ENCODE measurements at regions of chr4 and their contacts with region 1.

Region 1: DNA sequence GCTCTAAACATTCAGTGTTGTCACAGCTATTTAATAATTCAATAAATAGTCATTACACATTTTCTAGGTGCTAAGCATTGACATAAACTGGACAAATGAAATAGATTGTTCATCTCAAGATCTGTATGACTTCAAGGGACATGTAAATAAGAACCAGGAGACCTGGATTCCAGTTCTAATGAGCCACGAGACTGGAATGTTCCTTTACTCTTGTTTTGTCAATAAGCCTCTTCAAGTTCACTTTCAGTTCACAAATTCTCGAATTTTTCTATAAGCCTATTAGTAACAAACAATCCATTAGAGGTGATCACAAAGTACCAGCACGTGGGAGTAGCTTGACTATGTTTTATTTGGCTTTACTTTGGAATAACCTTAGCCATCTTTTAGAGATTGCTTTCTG is 514.0 kb upstream of the SMIM31 start:
- DNase-seq: no peak
- H3K4me3 ChIP-seq: no peak overlapping the region
- H3K27ac ChIP-seq: no peak overlapping the region
- H3K4me1 ChIP-seq: no peaks in the 10 kb centered on the region
- H3K27me3 ChIP-seq: no peaks in the 10 kb centered on the region
- CTCF ChIP-seq: no peak

Region 2: GRCh38 chr4:164154416-164154815 is 85.6 kb before region 1 on chr4:
- CTCF ChIA-PET with region 1: no interaction called
- dilution Hi-C with region 1: loop called (anchors 10 kb)
- in situ Hi-C with region 1: no loop called
- intact Hi-C with region 1: no loop called
- DNase-seq: no peak
- H3K4me3 ChIP-seq: no peak overlapping the region
- H3K27ac ChIP-seq: no peak overlapping the region
- H3K4me1 ChIP-seq: no peaks in the 10 kb centered on the region
- H3K27me3 ChIP-seq: no peaks in the 10 kb centered on the region
- CTCF ChIP-seq: no peak

Measured in mammary epithelial cell (primary cell).